ENCODE measurements at regions of chr14 and their contacts with region 1.

Region 1: DNA sequence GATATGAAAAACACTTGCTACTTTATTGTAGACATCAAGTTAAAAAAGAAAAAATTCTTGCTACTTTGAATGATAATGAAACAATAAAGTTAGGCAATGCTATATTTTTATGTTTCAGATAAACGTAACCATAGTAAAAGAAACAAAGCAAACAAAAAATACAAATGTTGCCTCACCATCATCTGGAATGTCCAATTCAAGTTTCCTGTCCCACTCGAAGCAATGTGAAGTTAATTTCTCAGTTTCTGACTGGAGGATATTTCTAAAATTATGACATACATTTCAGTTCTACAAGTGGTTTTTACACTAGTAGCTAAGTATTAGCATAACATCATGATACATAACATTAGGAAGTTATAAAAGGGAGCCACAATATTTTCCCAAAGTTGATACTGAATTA is 20.9 kb downstream of the DLGAP5 start:
- DNase-seq: no peak
- H3K4me3 ChIP-seq: no peak overlapping the region
- H3K27ac ChIP-seq: no peak overlapping the region
- H3K4me1 ChIP-seq: no peaks in the 10 kb centered on the region
- H3K27me3 ChIP-seq: no peaks in the 10 kb centered on the region
- CTCF ChIP-seq: no peak

Region 2: DNA sequence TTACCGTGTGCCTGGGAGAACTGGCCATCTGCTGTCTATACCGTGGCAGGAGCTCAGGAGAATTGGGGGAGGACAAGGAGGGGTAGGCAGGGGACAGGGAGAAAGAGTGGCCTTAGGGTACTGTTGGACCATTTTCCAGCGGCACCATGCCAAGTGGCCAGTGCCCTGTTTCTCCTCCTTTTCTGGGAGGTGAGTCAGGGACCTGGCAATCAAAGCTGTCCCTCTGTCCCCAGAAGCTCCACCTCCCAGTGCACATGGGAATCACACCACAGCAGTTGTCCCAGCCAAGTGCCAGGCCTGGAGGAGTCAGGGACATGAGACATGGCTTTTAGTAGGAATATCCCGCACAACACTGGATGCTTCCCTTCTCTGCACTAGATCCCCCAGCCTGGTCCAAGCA is 385.9 kb before region 1 on chr14:
- CTCF ChIA-PET with region 1: interaction called, 10 read pairs
- POLR2A ChIA-PET with region 1: no interaction called
- intact Hi-C with region 1: no loop called
- DNase-seq: no peak
- H3K4me3 ChIP-seq: no peak overlapping the region
- H3K27ac ChIP-seq: no peak overlapping the region
- H3K4me1 ChIP-seq: no peaks in the 10 kb centered on the region
- H3K27me3 ChIP-seq: no peaks in the 10 kb centered on the region
- CTCF ChIP-seq: no peak

Region 3: DNA sequence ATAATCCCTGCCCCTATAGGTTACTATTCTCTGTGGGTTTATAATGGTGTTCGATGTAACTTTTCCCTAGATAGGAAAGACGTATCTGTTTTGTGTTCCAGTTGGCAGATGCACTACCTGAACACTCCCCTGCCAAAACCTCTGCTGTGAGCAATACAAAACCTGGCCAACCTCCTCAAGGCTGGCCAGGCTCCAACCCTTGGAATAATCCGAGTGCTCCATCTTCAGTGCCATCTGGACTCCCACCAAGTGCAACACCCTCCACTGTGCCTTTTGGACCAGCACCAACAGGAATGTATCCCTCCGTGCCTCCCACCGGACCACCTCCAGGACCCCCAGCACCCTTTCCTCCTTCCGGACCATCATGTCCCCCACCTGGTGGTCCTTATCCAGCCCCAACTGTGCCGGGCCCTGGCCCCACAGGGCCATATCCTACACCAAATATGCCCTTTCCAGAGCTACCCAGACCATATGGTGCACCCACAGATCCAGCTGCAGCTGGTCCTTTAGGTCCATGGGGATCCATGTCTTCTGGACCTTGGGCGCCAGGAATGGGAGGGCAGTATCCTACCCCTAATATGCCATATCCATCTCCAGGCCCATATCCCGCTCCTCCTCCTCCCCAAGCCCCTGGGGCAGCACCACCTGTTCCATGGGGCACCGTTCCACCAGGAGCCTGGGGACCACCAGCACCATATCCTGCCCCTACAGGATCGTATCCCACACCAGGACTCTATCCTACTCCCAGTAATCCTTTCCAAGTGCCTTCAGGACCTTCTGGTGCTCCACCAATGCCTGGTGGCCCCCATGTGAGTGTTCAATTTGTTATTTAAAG is 107.8 kb before region 1 on chr14:
- CTCF ChIA-PET with region 1: no interaction called
- POLR2A ChIA-PET with region 1: no interaction called
- intact Hi-C with region 1: no loop called
- DNase-seq: no peak
- H3K4me3 ChIP-seq: no peak overlapping the region
- H3K27ac ChIP-seq: no peak overlapping the region
- H3K4me1 ChIP-seq: no peaks in the 10 kb centered on the region
- H3K27me3 ChIP-seq: no peaks in the 10 kb centered on the region
- CTCF ChIP-seq: no peak